ENCODE measurements at regions of chr9 and their contacts with region 1.

Region 1: DNA sequence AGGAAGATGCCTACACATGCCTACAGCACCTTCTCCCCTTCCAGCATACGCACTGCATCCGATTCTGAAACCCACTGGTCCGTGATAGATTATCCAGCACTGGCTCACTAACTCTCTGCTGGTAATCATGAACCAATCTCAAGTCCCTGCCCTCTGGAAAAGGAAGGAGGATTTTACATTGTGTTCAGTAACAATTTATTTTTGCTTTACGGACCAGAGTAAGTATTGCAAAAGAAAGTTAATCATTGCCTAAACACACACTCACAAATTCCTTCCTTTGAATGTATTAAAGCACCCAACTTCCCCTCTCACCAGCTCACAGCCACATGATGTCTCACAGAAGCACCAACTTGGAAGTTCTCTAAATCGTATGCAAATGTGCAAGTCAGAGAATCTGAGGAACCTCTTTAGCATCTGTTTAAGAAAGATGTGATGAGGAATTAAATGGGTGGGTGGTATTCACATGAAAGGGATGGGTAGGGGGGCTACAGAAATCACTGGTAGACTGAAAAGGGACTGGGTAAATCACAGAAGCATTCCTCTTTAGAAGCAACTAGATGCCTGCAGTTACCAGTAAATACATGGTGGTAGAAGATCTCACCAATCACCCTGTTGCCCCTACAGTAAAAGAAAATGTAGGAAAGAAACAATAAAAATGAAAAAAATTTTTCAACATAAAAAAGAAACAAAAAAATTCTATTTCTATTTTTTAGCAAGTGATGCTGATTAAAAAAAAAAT is 8.4 kb downstream of the GNAQ start:
- DNase-seq: peak; percentile 64
- H3K4me3 ChIP-seq: peak overlapping the region in 1 of 3 experiments; percentile 13
- H3K27ac ChIP-seq: peak overlapping the region; percentile 36
- H3K4me1 ChIP-seq: peaks cover 58% of the 10 kb centered on the region
- H3K27me3 ChIP-seq: no peaks in the 10 kb centered on the region
- CTCF ChIP-seq: no peak
- POLR2A ChIP-seq: no peak

Region 2: GRCh38 chr9:77712533-77713130 is 310.5 kb before region 1 on chr9:
- CTCF ChIA-PET with region 1: no interaction called
- POLR2A ChIA-PET with region 1: no interaction called
- dilution Hi-C with region 1: no loop called
- intact Hi-C with region 1: loop called (anchors 5 kb)
- DNase-seq: peak; percentile 81
- H3K4me3 ChIP-seq: peak overlapping the region in 1 of 3 experiments; percentile 19
- H3K27ac ChIP-seq: peak overlapping the region; percentile 97
- H3K4me1 ChIP-seq: peaks cover 69% of the 10 kb centered on the region
- H3K27me3 ChIP-seq: no peaks in the 10 kb centered on the region
- CTCF ChIP-seq: no peak
- POLR2A ChIP-seq: no peak

Region 3: GRCh38 chr9:78004478-78005229 is 18.5 kb before region 1 on chr9:
- CTCF ChIA-PET with region 1: interaction called, 5 read pairs
- POLR2A ChIA-PET with region 1: no interaction called
- dilution Hi-C with region 1: no loop called
- intact Hi-C with region 1: loop called (anchors 1 kb)
- DNase-seq: no peak
- H3K4me3 ChIP-seq: no peak overlapping the region
- H3K27ac ChIP-seq: no peak overlapping the region
- H3K4me1 ChIP-seq: peaks cover 32% of the 10 kb centered on the region
- H3K27me3 ChIP-seq: no peaks in the 10 kb centered on the region
- CTCF ChIP-seq: no peak
- POLR2A ChIP-seq: no peak

Region 4: DNA sequence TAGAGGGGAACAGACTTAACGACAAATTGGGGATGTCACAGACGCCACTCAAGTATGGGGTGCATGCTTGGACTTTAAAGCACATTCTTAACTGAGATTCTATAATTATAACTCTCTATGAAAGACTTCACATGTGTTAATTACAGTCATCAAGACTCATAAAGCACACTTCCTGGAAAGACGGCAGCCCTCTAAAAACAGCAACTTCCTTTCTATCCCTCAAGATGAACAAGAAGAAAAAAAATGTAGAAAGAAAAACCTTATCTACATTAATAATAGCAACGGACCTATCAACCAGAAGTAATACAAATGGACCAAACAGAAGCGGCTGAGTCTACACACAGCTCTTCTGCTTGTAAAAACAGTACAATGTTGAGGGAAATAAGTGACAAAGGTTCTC is 12.7 kb before region 1 on chr9:
- CTCF ChIA-PET with region 1: interaction called, 4 read pairs
- POLR2A ChIA-PET with region 1: no interaction called
- dilution Hi-C with region 1: no loop called
- intact Hi-C with region 1: loop called (anchors 1 kb)
- DNase-seq: peak; percentile 46
- H3K4me3 ChIP-seq: no peak overlapping the region
- H3K27ac ChIP-seq: no peak overlapping the region
- H3K4me1 ChIP-seq: peaks cover 17% of the 10 kb centered on the region
- H3K27me3 ChIP-seq: no peaks in the 10 kb centered on the region
- CTCF ChIP-seq: no peak
- POLR2A ChIP-seq: no peak